GM12878 (cell line): ENCODE measurements at regions of chr21 and their contacts with region 1.

Region 1: GRCh38 chr21:32940079-32941014 is 85.4 kb upstream of the OLIG2 start:
- DNase-seq: no peak
- ATAC-seq: peak; percentile 76
- H3K4me3 ChIP-seq: no peak overlapping the region
- H3K27ac ChIP-seq: no peak overlapping the region
- H3K4me1 ChIP-seq: no peaks in the 10 kb centered on the region
- H3K27me3 ChIP-seq: no peaks in the 10 kb centered on the region
- CTCF ChIP-seq: peak; percentile 60 to 78 (median 67)
- EP300 ChIP-seq: no peak
- POLR2A ChIP-seq: no peak
- RAD21 ChIP-seq: peak; percentile 64

Region 2: GRCh38 chr21:32834916-32835235 is 105.5 kb before region 1 on chr21:
- CTCF ChIA-PET with region 1: interaction called, 12 read pairs
- POLR2A ChIA-PET with region 1: no interaction called
- RAD21 ChIA-PET with region 1: no interaction called
- SMC1A ChIA-PET with region 1: interaction called, 10 read pairs
- in situ Hi-C with region 1: no loop called
- intact Hi-C with region 1: no loop called
- DNase-seq: no peak
- ATAC-seq: no peak
- H3K4me3 ChIP-seq: no peak overlapping the region
- H3K27ac ChIP-seq: no peak overlapping the region
- H3K4me1 ChIP-seq: no peaks in the 10 kb centered on the region
- H3K27me3 ChIP-seq: no peaks in the 10 kb centered on the region
- CTCF ChIP-seq: no peak
- EP300 ChIP-seq: no peak
- POLR2A ChIP-seq: no peak
- RAD21 ChIP-seq: no peak

Region 3: DNA sequence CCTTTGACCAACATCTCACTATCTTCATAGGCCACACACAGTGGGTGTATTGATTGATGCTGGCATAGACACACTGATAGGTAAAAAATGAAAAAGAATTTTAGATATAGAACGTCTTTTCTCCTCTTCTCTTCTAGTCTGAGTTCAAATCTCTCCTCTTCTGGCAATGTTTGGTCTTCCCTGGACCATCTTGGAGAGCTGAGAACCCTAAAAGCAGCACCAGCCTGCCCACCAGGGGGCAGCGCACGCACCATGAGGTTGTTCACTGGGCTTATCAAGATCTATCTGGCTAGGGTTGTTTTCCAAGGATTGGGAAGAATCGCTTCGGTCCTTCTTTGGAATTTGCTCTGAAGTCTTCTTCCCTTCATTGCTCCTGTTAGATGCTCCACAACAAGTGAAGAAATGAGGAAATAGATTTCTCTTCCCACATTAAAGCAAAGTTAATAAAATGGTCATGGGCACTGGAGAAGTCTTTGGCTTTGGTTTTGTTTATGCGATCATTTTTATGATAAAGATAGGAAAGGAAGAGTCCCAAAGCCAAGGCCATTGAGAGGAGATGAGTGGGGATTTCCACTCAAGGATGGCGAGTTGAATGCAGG is 18.6 kb before region 1 on chr21:
- CTCF ChIA-PET with region 1: interaction called, 22 read pairs
- POLR2A ChIA-PET with region 1: no interaction called
- RAD21 ChIA-PET with region 1: interaction called, 4 read pairs
- SMC1A ChIA-PET with region 1: interaction called, 8 read pairs
- in situ Hi-C with region 1: no loop called
- intact Hi-C with region 1: no loop called
- DNase-seq: no peak
- ATAC-seq: peak; percentile 48; the same call in 2 of the 3 replicates
- H3K4me3 ChIP-seq: no peak overlapping the region
- H3K27ac ChIP-seq: no peak overlapping the region
- H3K4me1 ChIP-seq: no peaks in the 10 kb centered on the region
- H3K27me3 ChIP-seq: no peaks in the 10 kb centered on the region
- CTCF ChIP-seq: peak; percentile 42 to 56 (median 42); a peak in 5 of 6 replicates
- EP300 ChIP-seq: no peak
- POLR2A ChIP-seq: no peak
- RAD21 ChIP-seq: peak; percentile 51

Region 4: GRCh38 chr21:32929633-32930038 is 10.7 kb before region 1 on chr21:
- CTCF ChIA-PET with region 1: interaction called, 14 read pairs
- POLR2A ChIA-PET with region 1: no interaction called
- RAD21 ChIA-PET with region 1: interaction called, 9 read pairs
- SMC1A ChIA-PET with region 1: interaction called, 25 read pairs
- in situ Hi-C with region 1: no loop called
- intact Hi-C with region 1: no loop called
- DNase-seq: peak; percentile 69
- ATAC-seq: peak; percentile 79
- H3K4me3 ChIP-seq: no peak overlapping the region; the same call in 1 of the 2 replicates
- H3K27ac ChIP-seq: peak overlapping the region; percentile 73
- H3K4me1 ChIP-seq: peaks cover 31% of the 10 kb centered on the region
- H3K27me3 ChIP-seq: no peaks in the 10 kb centered on the region
- CTCF ChIP-seq: no peak
- EP300 ChIP-seq: peak; percentile 33 to 36; a peak in 2 of 4 replicates
- POLR2A ChIP-seq: no peak
- RAD21 ChIP-seq: no peak